Caco-2 (cell line): ENCODE measurements at regions of chr12 and their contacts with region 1.

Region 1: GRCh38 chr12:54017878-54018467 is 9.2 kb downstream of the HOXC8 start:
- DNase-seq: peak; percentile 87
- H3K4me3 ChIP-seq: peak overlapping the region; percentile 58
- H3K4me3 Mint-ChIP-seq: peak overlapping the region; percentile 98
- H3K27ac Mint-ChIP-seq: peak overlapping the region; percentile 83
- H3K4me1 ChIP-seq: peaks cover 30% of the 10 kb centered on the region
- H3K4me1 Mint-ChIP-seq: peaks cover 27% of the 10 kb centered on the region
- H3K27me3 ChIP-seq: no peaks in the 10 kb centered on the region
- H3K27me3 Mint-ChIP-seq: no peaks in the 10 kb centered on the region
- CTCF ChIP-seq: no peak

Region 2: GRCh38 chr12:53974084-53975063 is 43.6 kb before region 1 on chr12 and contains the start of gene HOTAIR:
- CTCF ChIA-PET with region 1: no interaction called
- POLR2A ChIA-PET with region 1: no interaction called
- intact Hi-C with region 1: loop called (anchors 5 kb)
- DNase-seq: peak in 1 of 2 experiments; percentile 59
- H3K4me3 ChIP-seq: peak within 1 kb of the TSS; percentile 66
- H3K4me3 Mint-ChIP-seq: peak within 1 kb of the TSS; percentile 83
- H3K27ac Mint-ChIP-seq: peak within 1 kb of the TSS; percentile 73
- H3K4me1 ChIP-seq: peaks cover 20% of the 10 kb centered on the region
- H3K4me1 Mint-ChIP-seq: peaks cover 8% of the 10 kb centered on the region
- H3K27me3 ChIP-seq: no peaks in the 10 kb centered on the region
- H3K27me3 Mint-ChIP-seq: no peaks in the 10 kb centered on the region
- CTCF ChIP-seq: no peak
- total RNA-seq, gene HOTAIR: 1.6 and 1.9 TPM in 2 replicates

Region 3: DNA sequence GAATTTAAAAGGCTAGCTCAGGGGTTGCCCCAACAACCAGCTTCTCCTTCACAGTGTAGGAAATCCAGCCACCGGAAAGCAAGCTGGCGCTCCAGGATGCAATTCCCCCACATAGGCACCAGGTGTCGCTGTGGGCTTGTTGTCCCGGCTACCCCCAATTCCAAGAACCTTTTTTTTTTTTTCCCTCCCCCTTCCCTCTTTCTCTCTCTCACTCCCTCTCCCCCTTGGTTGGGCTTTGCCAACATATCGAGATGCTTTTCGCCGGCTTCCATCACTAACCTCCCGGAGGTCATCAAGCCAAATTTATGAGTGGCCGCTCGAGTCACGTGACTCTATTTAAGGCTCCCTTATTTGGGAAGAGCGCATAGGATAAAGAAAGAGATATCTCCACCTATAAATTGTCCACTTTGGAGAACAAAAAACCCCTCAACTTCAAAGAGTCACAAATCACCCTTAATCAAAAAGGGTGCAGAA is 14.7 kb after region 1 on chr12 and contains the start of gene HOXC5:
- CTCF ChIA-PET with region 1: interaction called, 19 read pairs
- POLR2A ChIA-PET with region 1: interaction called, 19 read pairs
- intact Hi-C with region 1: no loop called
- DNase-seq: peak; percentile 83 to 86
- H3K4me3 ChIP-seq: peak within 1 kb of the TSS; percentile 52
- H3K4me3 Mint-ChIP-seq: peak within 1 kb of the TSS; percentile 89
- H3K27ac Mint-ChIP-seq: peak within 1 kb of the TSS; percentile 90
- H3K4me1 ChIP-seq: peaks cover 9% of the 10 kb centered on the region
- H3K4me1 Mint-ChIP-seq: peaks cover 10% of the 10 kb centered on the region
- H3K27me3 ChIP-seq: no peaks in the 10 kb centered on the region
- H3K27me3 Mint-ChIP-seq: no peaks in the 10 kb centered on the region
- CTCF ChIP-seq: peak; percentile 96 to 97
- total RNA-seq, gene HOXC5: 3.4 and 3.6 TPM in 2 replicates

Region 4: GRCh38 chr12:54164387-54165145 is 146.6 kb after region 1 on chr12:
- CTCF ChIA-PET with region 1: no interaction called
- POLR2A ChIA-PET with region 1: no interaction called
- intact Hi-C with region 1: no loop called
- DNase-seq: no peak
- H3K4me3 ChIP-seq: no peak overlapping the region
- H3K4me3 Mint-ChIP-seq: no peak overlapping the region
- H3K27ac Mint-ChIP-seq: no peak overlapping the region
- H3K4me1 ChIP-seq: peaks cover 6% of the 10 kb centered on the region
- H3K4me1 Mint-ChIP-seq: peaks cover 11% of the 10 kb centered on the region
- H3K27me3 ChIP-seq: no peaks in the 10 kb centered on the region
- H3K27me3 Mint-ChIP-seq: no peaks in the 10 kb centered on the region
- CTCF ChIP-seq: no peak

Region 5: GRCh38 chr12:54201001-54201794 is 183.2 kb after region 1 on chr12:
- CTCF ChIA-PET with region 1: interaction called, 26 read pairs
- POLR2A ChIA-PET with region 1: interaction called, 4 read pairs
- intact Hi-C with region 1: no loop called
- DNase-seq: peak; percentile 84 to 90
- H3K4me3 ChIP-seq: no peak overlapping the region
- H3K4me3 Mint-ChIP-seq: no peak overlapping the region
- H3K27ac Mint-ChIP-seq: no peak overlapping the region
- H3K4me1 ChIP-seq: no peaks in the 10 kb centered on the region
- H3K4me1 Mint-ChIP-seq: peaks cover 8% of the 10 kb centered on the region
- H3K27me3 ChIP-seq: no peaks in the 10 kb centered on the region
- H3K27me3 Mint-ChIP-seq: no peaks in the 10 kb centered on the region
- CTCF ChIP-seq: peak; percentile 93 to 97

Region 6: GRCh38 chr12:54337280-54337842 is 319.4 kb after region 1 on chr12:
- CTCF ChIA-PET with region 1: interaction called, 13 read pairs
- POLR2A ChIA-PET with region 1: no interaction called
- intact Hi-C with region 1: no loop called
- DNase-seq: peak in 1 of 2 experiments; percentile 55
- H3K4me3 ChIP-seq: no peak overlapping the region
- H3K4me3 Mint-ChIP-seq: no peak overlapping the region
- H3K27ac Mint-ChIP-seq: no peak overlapping the region
- H3K4me1 ChIP-seq: peaks cover 38% of the 10 kb centered on the region
- H3K4me1 Mint-ChIP-seq: peaks cover 31% of the 10 kb centered on the region
- H3K27me3 ChIP-seq: no peaks in the 10 kb centered on the region
- H3K27me3 Mint-ChIP-seq: no peaks in the 10 kb centered on the region
- CTCF ChIP-seq: peak in 1 of 2 experiments; percentile 6